Natural killer cell (primary cell): ENCODE measurements at regions of chr5 and their contacts with region 1.

Region 1: GRCh38 chr5:172849606-172850453 is 15.8 kb downstream of the ERGIC1 start:
- DNase-seq: no peak
- ATAC-seq: peak in 2 of 3 donors; percentile 13 to 14
- H3K4me3 ChIP-seq: no peak overlapping the region
- H3K4me3 Mint-ChIP-seq: peak overlapping the region; percentile 28
- H3K27ac ChIP-seq: peak overlapping the region; percentile 65
- H3K27ac Mint-ChIP-seq: peak overlapping the region; percentile 82 to 89
- H3K4me1 ChIP-seq: peaks cover 71% of the 10 kb centered on the region
- H3K4me1 Mint-ChIP-seq: peaks cover 60 to 66% of the 10 kb centered on the region in 2 donors
- H3K27me3 ChIP-seq: no peaks in the 10 kb centered on the region
- H3K27me3 Mint-ChIP-seq: no peaks in the 10 kb centered on the region
- CTCF ChIP-seq: no peak

Region 2: GRCh38 chr5:172583931-172584511 is 265.8 kb before region 1 on chr5:
- intact Hi-C with region 1: no loop called
- DNase-seq: no peak
- ATAC-seq: no peak
- H3K4me3 ChIP-seq: no peak overlapping the region
- H3K4me3 Mint-ChIP-seq: no peak overlapping the region
- H3K27ac ChIP-seq: no peak overlapping the region
- H3K27ac Mint-ChIP-seq: no peak overlapping the region
- H3K4me1 ChIP-seq: no peaks in the 10 kb centered on the region
- H3K4me1 Mint-ChIP-seq: no peaks in the 10 kb centered on the region
- H3K27me3 ChIP-seq: no peaks in the 10 kb centered on the region
- H3K27me3 Mint-ChIP-seq: peaks cover 27 to 34% of the 10 kb centered on the region in 2 donors
- CTCF ChIP-seq: no peak

Region 3: GRCh38 chr5:172721301-172722130 is 128.3 kb before region 1 on chr5:
- intact Hi-C with region 1: loop called (anchors 5 kb)
- DNase-seq: no peak
- ATAC-seq: peak; percentile 16 to 39 (median 24)
- H3K4me3 ChIP-seq: no peak overlapping the region
- H3K4me3 Mint-ChIP-seq: peak overlapping the region; percentile 83
- H3K27ac ChIP-seq: peak overlapping the region; percentile 17
- H3K27ac Mint-ChIP-seq: peak overlapping the region; percentile 65 to 76
- H3K4me1 ChIP-seq: peaks cover 40% of the 10 kb centered on the region
- H3K4me1 Mint-ChIP-seq: peaks cover 28 to 33% of the 10 kb centered on the region in 2 donors
- H3K27me3 ChIP-seq: peaks cover 21% of the 10 kb centered on the region
- H3K27me3 Mint-ChIP-seq: peaks cover 50 to 51% of the 10 kb centered on the region in 2 donors
- CTCF ChIP-seq: no peak

Region 4: DNA sequence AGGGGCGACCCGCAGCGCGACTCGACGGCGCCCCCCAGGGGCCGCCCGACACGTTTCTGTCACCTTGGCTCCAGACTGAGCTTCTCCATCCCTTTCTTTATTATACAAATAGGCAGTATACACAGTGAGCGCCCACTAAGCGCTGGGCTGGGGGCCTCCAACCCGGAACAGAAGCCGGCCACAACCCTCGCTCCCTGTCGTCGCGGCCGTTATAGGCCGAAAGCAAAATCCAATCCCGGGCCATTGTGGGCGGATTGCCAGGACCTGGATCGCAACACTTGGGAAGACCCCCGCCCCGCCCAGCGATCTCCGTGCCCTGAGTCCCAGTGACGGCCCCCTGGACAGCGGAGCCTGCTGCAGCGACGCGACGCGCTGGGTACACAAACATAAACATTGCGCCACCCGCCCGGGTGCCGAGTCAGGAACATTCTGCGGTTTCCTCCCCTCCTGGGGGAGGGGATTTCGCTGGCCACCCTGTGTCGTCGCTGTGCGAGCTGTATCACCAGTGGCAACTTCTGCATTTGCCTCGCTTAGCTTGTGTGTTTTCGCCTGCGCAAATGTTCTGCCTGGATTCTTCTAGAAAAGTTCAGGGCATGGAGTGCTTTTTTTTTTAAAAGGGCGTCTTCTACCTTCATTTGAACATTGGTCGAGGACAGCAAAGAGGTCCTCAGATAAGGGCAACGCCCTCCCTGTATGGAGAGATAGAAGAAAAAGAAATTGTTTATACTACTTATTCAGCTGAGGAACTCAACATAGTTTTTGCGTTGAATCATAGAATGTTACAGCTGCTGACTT is 77.5 kb before region 1 on chr5:
- intact Hi-C with region 1: loop called (anchors 1 kb)
- DNase-seq: peak; percentile 89 to 95
- ATAC-seq: peak; percentile 44 to 70 (median 60)
- H3K4me3 ChIP-seq: peak overlapping the region; percentile 72
- H3K4me3 Mint-ChIP-seq: peak overlapping the region; percentile 96
- H3K27ac ChIP-seq: peak overlapping the region; percentile 99
- H3K27ac Mint-ChIP-seq: peak overlapping the region; percentile 98 to 99
- H3K4me1 ChIP-seq: peaks cover 69% of the 10 kb centered on the region
- H3K4me1 Mint-ChIP-seq: peaks cover 57 to 87% of the 10 kb centered on the region in 2 donors
- H3K27me3 ChIP-seq: no peaks in the 10 kb centered on the region
- H3K27me3 Mint-ChIP-seq: no peaks in the 10 kb centered on the region
- CTCF ChIP-seq: peak; percentile 87

Region 5: DNA sequence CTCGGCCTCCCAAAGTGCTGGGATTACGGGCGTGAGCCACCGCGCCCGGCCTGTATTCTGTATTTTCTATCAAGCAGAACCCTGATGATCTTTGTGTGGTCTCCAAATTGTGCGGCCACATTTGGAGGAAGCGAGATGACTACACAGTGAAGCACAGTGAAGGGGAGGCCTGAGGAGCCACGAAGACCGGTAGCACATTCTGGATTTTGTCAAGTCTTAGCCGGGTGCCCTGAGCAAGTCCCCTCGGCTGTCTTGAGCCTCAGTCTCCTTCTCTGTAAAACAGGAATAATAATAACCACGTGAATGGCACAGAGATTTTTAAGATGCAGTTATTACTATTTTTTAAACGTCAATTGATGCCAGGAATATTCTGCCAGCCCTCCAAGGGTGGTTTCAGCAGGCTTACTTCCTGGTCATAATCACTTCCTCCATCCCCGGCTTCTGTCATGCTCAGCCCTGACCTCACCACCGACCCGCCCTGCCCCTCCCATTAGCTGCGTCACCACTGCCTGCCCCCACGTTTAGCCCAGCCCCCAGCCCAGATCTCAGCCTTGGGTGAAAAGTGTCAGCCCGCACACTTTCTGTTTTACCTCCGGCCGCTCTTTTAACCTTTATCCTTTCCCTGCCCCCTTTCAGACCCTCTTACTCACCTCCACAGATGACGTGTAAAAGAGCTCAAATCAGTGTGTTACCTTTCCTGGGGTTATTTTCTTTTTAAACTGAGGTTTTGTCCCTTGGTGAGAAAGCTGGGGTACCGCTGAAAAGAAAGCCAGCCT is 42.7 kb before region 1 on chr5:
- intact Hi-C with region 1: loop called (anchors 5 kb)
- DNase-seq: peak; percentile 77 to 90
- ATAC-seq: peak; percentile 97 to 99 (median 99)
- H3K4me3 ChIP-seq: peak overlapping the region; percentile 49
- H3K4me3 Mint-ChIP-seq: peak overlapping the region; percentile 80
- H3K27ac ChIP-seq: peak overlapping the region; percentile 91
- H3K27ac Mint-ChIP-seq: peak overlapping the region; percentile 81 to 93
- H3K4me1 ChIP-seq: peaks cover 21% of the 10 kb centered on the region
- H3K4me1 Mint-ChIP-seq: peaks cover 9 to 25% of the 10 kb centered on the region in 2 donors
- H3K27me3 ChIP-seq: no peaks in the 10 kb centered on the region
- H3K27me3 Mint-ChIP-seq: no peaks in the 10 kb centered on the region
- CTCF ChIP-seq: no peak

Region 6: GRCh38 chr5:172833686-172834414 is 16.0 kb before region 1 on chr5 and contains the start of gene ERGIC1:
- intact Hi-C with region 1: loop called (anchors 2 kb)
- DNase-seq: peak; percentile 78 to 79
- ATAC-seq: peak; percentile 74 to 89 (median 87)
- H3K4me3 ChIP-seq: peak within 1 kb of the TSS; percentile 67
- H3K4me3 Mint-ChIP-seq: peak within 1 kb of the TSS; percentile 90
- H3K27ac ChIP-seq: peak within 1 kb of the TSS; percentile 90
- H3K27ac Mint-ChIP-seq: peak within 1 kb of the TSS; percentile 95 to 96
- H3K4me1 ChIP-seq: peaks cover 53% of the 10 kb centered on the region
- H3K4me1 Mint-ChIP-seq: peaks cover 37 to 48% of the 10 kb centered on the region in 2 donors
- H3K27me3 ChIP-seq: no peaks in the 10 kb centered on the region
- H3K27me3 Mint-ChIP-seq: no peaks in the 10 kb centered on the region
- CTCF ChIP-seq: no peak
- total RNA-seq, gene ERGIC1: 86.2 to 126 (median 121) TPM

Region 7: DNA sequence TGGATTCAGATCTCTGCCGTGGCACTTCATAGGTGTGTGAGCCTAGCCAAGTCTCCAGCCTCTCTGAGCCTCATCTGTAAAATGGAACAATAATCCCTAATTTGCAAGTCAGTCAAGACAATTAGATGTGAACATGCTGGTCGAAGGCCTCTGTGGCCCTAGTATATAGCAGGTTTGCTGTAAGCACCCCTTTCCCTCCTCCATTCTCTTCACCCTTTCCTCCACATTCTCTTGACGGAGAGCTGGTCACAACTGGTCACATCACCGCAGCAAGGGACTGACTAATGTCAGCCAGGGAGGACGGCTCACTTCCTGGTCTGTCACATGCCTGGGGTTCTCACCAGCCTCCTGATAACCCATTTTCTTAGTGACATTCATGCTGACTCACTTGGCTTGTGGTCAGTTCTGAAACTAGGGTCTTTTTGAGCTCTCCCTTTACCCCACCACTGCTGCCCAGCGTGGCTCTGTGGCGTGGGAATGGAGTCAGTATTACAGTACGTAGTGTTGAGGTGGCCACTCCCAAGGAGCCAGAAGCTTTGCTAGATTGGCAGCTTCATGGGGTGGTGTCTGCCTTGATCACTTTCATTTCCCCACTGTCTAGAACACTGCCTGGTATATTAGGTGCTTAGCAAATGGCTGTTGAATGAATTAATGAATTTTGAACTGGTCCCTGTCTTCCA is 32.0 kb after region 1 on chr5:
- intact Hi-C with region 1: loop called (anchors 5 kb)
- DNase-seq: peak; percentile 38 to 56
- ATAC-seq: peak; percentile 86 to 91 (median 90)
- H3K4me3 ChIP-seq: no peak overlapping the region
- H3K4me3 Mint-ChIP-seq: no peak overlapping the region
- H3K27ac ChIP-seq: peak overlapping the region; percentile 63
- H3K27ac Mint-ChIP-seq: peak overlapping the region; percentile 86 to 91
- H3K4me1 ChIP-seq: peaks cover 35% of the 10 kb centered on the region
- H3K4me1 Mint-ChIP-seq: peaks cover 29 to 50% of the 10 kb centered on the region in 2 donors
- H3K27me3 ChIP-seq: no peaks in the 10 kb centered on the region
- H3K27me3 Mint-ChIP-seq: no peaks in the 10 kb centered on the region
- CTCF ChIP-seq: no peak

Region 8: DNA sequence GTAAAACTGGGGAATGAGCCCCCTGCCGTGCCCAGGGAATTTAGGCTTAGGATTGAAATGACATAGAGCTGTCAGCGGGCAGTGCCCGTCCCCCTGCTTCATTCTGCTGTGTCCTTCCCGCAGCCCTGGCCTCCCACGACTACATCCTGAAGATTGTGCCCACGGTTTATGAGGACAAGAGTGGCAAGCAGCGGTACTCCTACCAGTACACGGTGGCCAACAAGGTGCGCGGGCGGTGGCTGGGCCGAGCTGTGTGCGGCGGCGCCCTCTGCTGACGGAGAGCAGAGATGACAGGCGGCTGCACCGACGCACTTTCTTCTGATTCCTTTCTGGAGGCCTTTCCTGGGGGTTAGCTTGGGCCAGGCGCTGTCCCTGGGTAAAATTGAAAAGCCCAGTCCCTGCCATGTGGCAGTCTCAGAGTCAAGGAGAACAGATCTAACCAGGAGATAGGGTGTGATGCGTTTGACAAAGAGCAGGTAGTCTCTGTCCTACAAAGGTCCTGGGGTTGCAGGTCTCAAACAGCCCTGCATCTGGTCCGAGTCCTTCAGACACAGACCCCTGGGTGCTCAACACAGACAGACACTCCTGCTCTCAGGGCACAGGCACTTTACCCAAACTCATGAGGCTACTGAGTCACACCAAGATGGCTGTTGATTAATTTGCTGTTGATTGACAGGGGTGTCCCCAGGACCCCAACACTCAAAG is 82.6 kb after region 1 on chr5:
- intact Hi-C with region 1: loop called (anchors 5 kb)
- DNase-seq: peak; percentile 72 to 86
- ATAC-seq: peak; percentile 93 to 100 (median 99)
- H3K4me3 ChIP-seq: no peak overlapping the region
- H3K4me3 Mint-ChIP-seq: no peak overlapping the region
- H3K27ac ChIP-seq: no peak overlapping the region
- H3K27ac Mint-ChIP-seq: peak overlapping the region; percentile 51 to 79
- H3K4me1 ChIP-seq: peaks cover 6% of the 10 kb centered on the region
- H3K4me1 Mint-ChIP-seq: peaks cover 7 to 8% of the 10 kb centered on the region in 2 donors
- H3K27me3 ChIP-seq: no peaks in the 10 kb centered on the region
- H3K27me3 Mint-ChIP-seq: no peaks in the 10 kb centered on the region
- CTCF ChIP-seq: peak; percentile 94